ENCODE measurements at regions of chr4 and their contacts with region 1.

Region 1: GRCh38 chr4:1309261-1310010 is 19.7 kb downstream of the MAEA start:
- DNase-seq: peak; percentile 45 to 76 (median 58)
- H3K4me3 ChIP-seq: peak overlapping the region; percentile 11
- H3K4me3 Mint-ChIP-seq: peak overlapping the region; percentile 78 to 88 (median 80)
- H3K27ac ChIP-seq: no peak overlapping the region
- H3K27ac Mint-ChIP-seq: peak overlapping the region; percentile 56 to 95 (median 89)
- H3K4me1 ChIP-seq: peaks cover 55% of the 10 kb centered on the region
- H3K4me1 Mint-ChIP-seq: peaks cover 54 to 77% (median 63%) of the 10 kb centered on the region in 3 donors
- H3K27me3 ChIP-seq: no peaks in the 10 kb centered on the region
- H3K27me3 Mint-ChIP-seq: no peaks in the 10 kb centered on the region

Region 2: DNA sequence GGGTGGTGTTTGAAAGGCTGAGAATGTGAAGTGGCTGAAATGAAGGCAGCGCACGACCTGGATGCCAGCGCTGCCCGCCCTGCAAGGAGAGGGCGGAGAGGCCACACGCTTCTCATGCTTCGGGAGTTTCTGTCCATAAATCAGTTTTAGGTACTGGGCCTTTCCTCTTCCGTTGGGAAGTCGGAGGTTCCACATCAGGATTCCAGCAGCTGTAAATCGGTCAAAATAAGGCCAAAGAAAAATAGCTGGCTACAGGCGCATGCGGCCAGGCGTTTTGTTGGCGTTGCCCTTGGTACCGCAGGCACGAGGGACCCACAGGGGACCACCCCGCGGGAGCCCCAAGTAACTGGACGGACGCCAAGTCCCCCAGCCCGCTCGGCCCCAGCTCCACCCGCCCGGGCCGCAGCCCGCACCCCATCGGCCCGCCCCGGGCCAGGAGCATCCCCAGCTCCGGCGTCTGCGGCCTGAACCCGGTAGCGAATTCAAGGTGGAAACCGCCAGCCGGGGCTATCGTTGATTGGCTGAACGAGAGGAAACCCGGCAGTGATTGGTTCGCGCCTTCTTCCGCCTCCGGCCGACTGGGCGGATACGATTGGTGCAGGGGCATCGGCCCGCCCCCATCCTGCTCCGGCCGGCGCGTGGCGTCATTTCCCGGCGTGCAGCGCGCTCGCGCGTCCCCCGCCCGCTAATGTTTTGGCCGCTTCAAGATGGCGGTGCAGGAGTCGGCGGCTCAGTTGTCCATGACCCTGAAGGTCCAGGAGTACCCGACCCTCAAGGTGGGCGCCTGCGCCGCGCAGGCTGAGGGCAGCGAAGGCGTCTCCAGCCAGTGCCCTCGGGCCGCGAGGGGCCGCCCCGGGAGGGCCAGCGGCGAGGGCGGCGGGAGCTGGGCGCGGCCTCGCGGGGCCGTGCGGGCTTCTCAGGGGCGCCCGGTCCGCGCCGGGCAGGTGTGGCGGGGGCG is 19.9 kb before region 1 on chr4 and contains the start of gene MAEA:
- CTCF ChIA-PET with region 1: interaction called, 3 read pairs
- POLR2A ChIA-PET with region 1: interaction called, 11 read pairs
- DNase-seq: peak; percentile 94 to 98 (median 96)
- H3K4me3 ChIP-seq: peak within 1 kb of the TSS; percentile 88
- H3K4me3 Mint-ChIP-seq: peak within 1 kb of the TSS; percentile 89 to 99 (median 92)
- H3K27ac ChIP-seq: peak within 1 kb of the TSS; percentile 80
- H3K27ac Mint-ChIP-seq: peak within 1 kb of the TSS; percentile 91 to 98 (median 96)
- H3K4me1 ChIP-seq: peaks cover 39% of the 10 kb centered on the region
- H3K4me1 Mint-ChIP-seq: peaks cover 31 to 47% (median 42%) of the 10 kb centered on the region in 3 donors
- H3K27me3 ChIP-seq: no peaks in the 10 kb centered on the region
- H3K27me3 Mint-ChIP-seq: peaks cover 0 to 4% of the 10 kb centered on the region in 2 donors
- total RNA-seq, gene MAEA: 59.4 to 63.8 TPM